Mammary epithelial cell (primary cell): ENCODE measurements at regions of chr1 and their contacts with region 1.

Region 1: GRCh38 chr1:20574686-20575540 is 14.0 kb upstream of the CDA start:
- DNase-seq: peak; percentile 51
- H3K4me3 ChIP-seq: no peak overlapping the region
- H3K27ac ChIP-seq: no peak overlapping the region
- H3K4me1 ChIP-seq: peaks cover 15% of the 10 kb centered on the region
- H3K27me3 ChIP-seq: no peaks in the 10 kb centered on the region
- CTCF ChIP-seq: peak; percentile 59 to 83

Region 2: DNA sequence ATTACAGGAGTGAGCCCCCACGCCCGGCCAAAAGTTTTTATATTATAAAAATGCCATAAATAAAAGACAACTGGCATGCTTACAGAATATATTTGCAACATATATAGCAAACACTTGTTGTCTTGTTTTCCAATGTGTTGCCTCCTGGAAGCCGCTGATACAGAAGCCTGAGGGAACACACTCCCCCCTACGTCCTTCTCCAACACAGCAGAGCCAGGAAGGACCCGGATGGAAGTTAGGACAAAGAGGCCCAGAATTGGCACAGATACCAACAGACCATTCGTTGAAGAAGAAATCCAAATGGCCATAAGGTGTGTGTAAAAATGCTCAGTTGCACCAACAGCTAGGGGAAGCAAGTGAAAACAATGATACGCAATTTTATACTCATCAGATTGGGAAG is 506.2 kb before region 1 on chr1:
- CTCF ChIA-PET with region 1: interaction called, 17 read pairs
- dilution Hi-C with region 1: no loop called
- in situ Hi-C with region 1: no loop called
- intact Hi-C with region 1: no loop called
- DNase-seq: no peak
- H3K4me3 ChIP-seq: no peak overlapping the region
- H3K27ac ChIP-seq: no peak overlapping the region
- H3K4me1 ChIP-seq: peaks cover 5% of the 10 kb centered on the region
- H3K27me3 ChIP-seq: no peaks in the 10 kb centered on the region
- CTCF ChIP-seq: no peak

Region 3: GRCh38 chr1:20589331-20590278 is 14.7 kb after region 1 on chr1:
- CTCF ChIA-PET with region 1: interaction called, 11 read pairs
- dilution Hi-C with region 1: no loop called
- in situ Hi-C with region 1: no loop called
- intact Hi-C with region 1: no loop called
- DNase-seq: no peak
- H3K4me3 ChIP-seq: peak overlapping the region; percentile 67 to 85 (median 69)
- H3K27ac ChIP-seq: peak overlapping the region; percentile 92
- H3K4me1 ChIP-seq: peaks cover 10% of the 10 kb centered on the region
- H3K27me3 ChIP-seq: no peaks in the 10 kb centered on the region
- CTCF ChIP-seq: no peak

Region 4: DNA sequence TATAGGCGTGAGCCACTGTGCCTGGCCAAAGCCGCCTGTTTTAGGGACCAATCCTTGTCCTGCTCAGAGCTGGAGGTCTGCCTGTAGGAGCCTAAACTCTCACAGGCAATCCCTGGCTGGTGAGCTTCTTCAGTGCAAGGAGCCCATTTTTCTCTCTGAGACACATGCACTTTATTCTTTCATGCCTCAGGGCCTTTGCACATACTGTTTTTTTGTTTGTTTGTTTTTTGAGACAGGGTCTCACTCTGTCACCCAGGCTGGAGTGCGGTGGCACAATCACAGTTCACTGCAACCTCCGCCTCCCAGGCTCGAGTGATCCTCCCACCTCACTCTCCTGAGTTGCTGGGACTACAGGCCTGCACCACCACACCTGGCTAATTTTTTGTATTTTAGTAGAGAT is 36.7 kb after region 1 on chr1:
- CTCF ChIA-PET with region 1: interaction called, 4 read pairs
- dilution Hi-C with region 1: no loop called
- in situ Hi-C with region 1: no loop called
- intact Hi-C with region 1: loop called (anchors 2 kb)
- DNase-seq: no peak
- H3K4me3 ChIP-seq: no peak overlapping the region
- H3K27ac ChIP-seq: peak overlapping the region; percentile 63
- H3K4me1 ChIP-seq: peaks cover 23% of the 10 kb centered on the region
- H3K27me3 ChIP-seq: no peaks in the 10 kb centered on the region
- CTCF ChIP-seq: no peak

Region 5: GRCh38 chr1:20640183-20640597 is 65.3 kb after region 1 on chr1:
- CTCF ChIA-PET with region 1: interaction called, 50 read pairs
- dilution Hi-C with region 1: no loop called
- in situ Hi-C with region 1: loop called (anchors 5 kb)
- intact Hi-C with region 1: loop called (anchors 1 kb)
- DNase-seq: peak; percentile 37
- H3K4me3 ChIP-seq: no peak overlapping the region
- H3K27ac ChIP-seq: no peak overlapping the region
- H3K4me1 ChIP-seq: no peaks in the 10 kb centered on the region
- H3K27me3 ChIP-seq: no peaks in the 10 kb centered on the region
- CTCF ChIP-seq: peak; percentile 77 to 78

Region 6: GRCh38 chr1:21261551-21262281 is 686.8 kb after region 1 on chr1:
- CTCF ChIA-PET with region 1: no interaction called
- dilution Hi-C with region 1: no loop called
- in situ Hi-C with region 1: no loop called
- intact Hi-C with region 1: no loop called
- DNase-seq: peak; percentile 77
- H3K4me3 ChIP-seq: no peak overlapping the region
- H3K27ac ChIP-seq: peak overlapping the region; percentile 89
- H3K4me1 ChIP-seq: peaks cover 44% of the 10 kb centered on the region
- H3K27me3 ChIP-seq: no peaks in the 10 kb centered on the region
- CTCF ChIP-seq: no peak